ENCODE measurements at regions of chr5 and their contacts with region 1.

Region 1: GRCh38 chr5:134225618-134226440 is at the start of gene PPP2CA:
- H3K4me3 Mint-ChIP-seq: peak within 1 kb of the TSS; percentile 99
- H3K27ac Mint-ChIP-seq: peak within 1 kb of the TSS; percentile 100
- H3K4me1 Mint-ChIP-seq: peaks cover 34% of the 10 kb centered on the region
- H3K27me3 Mint-ChIP-seq: no peaks in the 10 kb centered on the region

Region 2: GRCh38 chr5:134184155-134185135 is 41.4 kb before region 1 on chr5:
- intact Hi-C with region 1: loop called (anchors 5 kb)
- H3K4me3 Mint-ChIP-seq: no peak overlapping the region
- H3K27ac Mint-ChIP-seq: no peak overlapping the region
- H3K4me1 Mint-ChIP-seq: no peaks in the 10 kb centered on the region
- H3K27me3 Mint-ChIP-seq: no peaks in the 10 kb centered on the region

Region 3: DNA sequence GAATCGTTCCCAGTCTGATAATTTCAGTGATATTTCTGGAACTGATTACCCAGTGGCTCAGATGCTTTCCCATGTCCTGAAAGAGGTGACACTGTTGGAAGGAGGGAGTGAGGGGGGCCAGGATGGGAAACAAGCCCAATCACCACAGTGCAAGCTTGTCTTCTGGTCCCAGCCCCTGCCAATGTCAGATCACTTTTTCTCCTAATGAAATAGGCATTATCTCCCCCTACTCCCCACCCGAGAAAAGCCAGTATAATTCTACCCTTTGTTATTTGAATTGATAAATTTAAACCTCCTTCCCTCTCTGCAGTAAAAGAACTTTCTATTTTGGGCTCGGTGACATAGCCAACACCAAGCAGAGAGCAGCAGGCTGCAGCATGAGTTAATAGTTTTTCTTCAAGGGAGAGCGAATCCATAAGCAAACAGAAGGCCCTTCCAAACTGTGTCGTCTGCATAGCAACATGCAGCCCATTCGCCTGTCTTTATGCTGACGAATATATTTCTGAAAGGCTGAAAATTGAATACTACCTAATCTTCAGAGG is 14.7 kb after region 1 on chr5:
- intact Hi-C with region 1: loop called (anchors 2 kb)
- H3K4me3 Mint-ChIP-seq: no peak overlapping the region
- H3K27ac Mint-ChIP-seq: peak overlapping the region; percentile 81
- H3K4me1 Mint-ChIP-seq: peaks cover 15% of the 10 kb centered on the region
- H3K27me3 Mint-ChIP-seq: peaks cover 4% of the 10 kb centered on the region

Region 4: DNA sequence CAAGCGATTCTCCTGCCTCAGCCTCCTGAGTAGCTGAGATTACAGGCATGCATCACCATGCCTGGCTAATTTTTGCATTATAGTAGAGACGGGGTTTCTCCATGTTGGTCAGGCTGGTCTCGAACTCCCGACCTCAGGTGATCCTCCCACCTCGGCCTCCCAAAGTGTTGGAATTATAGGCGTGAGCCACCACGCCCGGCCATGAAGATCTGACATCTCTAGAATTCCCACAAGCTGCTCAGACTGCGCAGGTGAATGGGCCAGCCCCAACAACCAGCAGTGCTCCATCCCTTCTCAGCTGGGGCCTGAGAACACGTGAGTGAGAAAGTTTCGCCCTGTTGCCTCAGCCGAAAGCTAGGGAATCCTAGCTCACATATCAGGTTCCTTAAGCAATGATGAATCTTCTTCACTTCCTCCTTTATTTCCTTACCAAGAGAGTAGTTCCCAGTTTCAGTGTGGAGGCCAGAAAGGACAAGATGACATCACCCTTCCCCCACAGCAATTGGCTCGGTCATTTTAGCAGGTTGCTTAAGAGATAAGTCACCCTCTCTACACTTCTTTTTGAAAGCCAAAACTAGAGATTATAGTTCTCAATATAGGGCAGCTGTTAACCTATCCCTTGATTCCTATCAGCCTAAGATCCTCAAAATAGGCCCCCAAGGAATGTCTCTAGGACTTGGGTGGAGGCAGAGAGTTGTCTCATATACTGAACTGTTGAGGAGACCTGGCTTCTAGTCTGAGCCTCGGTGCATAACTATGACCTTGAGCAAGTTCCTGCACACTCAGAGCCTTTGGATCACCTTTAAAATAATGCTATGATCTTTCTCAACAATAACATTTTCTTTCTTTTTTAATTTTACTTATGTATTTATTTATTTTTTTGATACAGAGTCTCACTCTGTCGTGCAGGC is 23.9 kb after region 1 on chr5:
- intact Hi-C with region 1: loop called (anchors 1 kb)
- H3K4me3 Mint-ChIP-seq: no peak overlapping the region
- H3K27ac Mint-ChIP-seq: peak overlapping the region; percentile 79
- H3K4me1 Mint-ChIP-seq: peaks cover 35% of the 10 kb centered on the region
- H3K27me3 Mint-ChIP-seq: no peaks in the 10 kb centered on the region

Region 5: GRCh38 chr5:135271533-135272310 is 1045.9 kb after region 1 on chr5:
- intact Hi-C with region 1: no loop called
- H3K4me3 Mint-ChIP-seq: no peak overlapping the region
- H3K27ac Mint-ChIP-seq: no peak overlapping the region
- H3K4me1 Mint-ChIP-seq: peaks cover 7% of the 10 kb centered on the region
- H3K27me3 Mint-ChIP-seq: peaks cover 7% of the 10 kb centered on the region

Measured in dendritic cell treated with granulocyte-macrophage colony-stimulating factor and Interleukin-4, amounts not matched to agents 40 ng/mL and 50 ng/mL, for 4 days (primary cell).